GM12878 (cell line): ENCODE measurements at regions of chr14 and their contacts with region 1.

Region 1: DNA sequence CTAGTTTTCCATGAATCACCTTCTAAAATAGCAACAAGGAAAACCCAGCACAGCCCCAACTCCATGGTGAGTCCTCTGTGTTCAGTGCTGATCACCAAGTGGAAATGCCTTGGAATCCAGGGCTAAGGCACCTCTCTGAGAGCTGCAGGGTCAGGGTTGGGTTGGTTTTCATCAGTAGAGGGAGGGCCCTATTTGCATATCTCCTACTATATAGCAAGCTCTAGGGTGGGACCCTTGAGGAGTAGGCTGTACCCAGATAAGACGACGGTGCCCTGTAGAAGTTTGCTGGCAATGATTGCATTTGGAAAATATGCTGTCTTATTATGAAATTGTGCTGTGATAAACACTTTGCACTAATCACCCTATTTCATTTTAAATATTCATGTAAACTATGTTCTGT is 1011.8 kb downstream of the TMEM121 start:
- DNase-seq: no peak
- ATAC-seq: no peak
- H3K4me3 ChIP-seq: no peak overlapping the region
- H3K27ac ChIP-seq: no peak overlapping the region
- H3K4me1 ChIP-seq: peaks cover 7% of the 10 kb centered on the region; the same call in 1 of the 2 replicates
- H3K27me3 ChIP-seq: no peaks in the 10 kb centered on the region
- CTCF ChIP-seq: no peak
- EP300 ChIP-seq: no peak
- POLR2A ChIP-seq: no peak
- RAD21 ChIP-seq: no peak

Region 2: DNA sequence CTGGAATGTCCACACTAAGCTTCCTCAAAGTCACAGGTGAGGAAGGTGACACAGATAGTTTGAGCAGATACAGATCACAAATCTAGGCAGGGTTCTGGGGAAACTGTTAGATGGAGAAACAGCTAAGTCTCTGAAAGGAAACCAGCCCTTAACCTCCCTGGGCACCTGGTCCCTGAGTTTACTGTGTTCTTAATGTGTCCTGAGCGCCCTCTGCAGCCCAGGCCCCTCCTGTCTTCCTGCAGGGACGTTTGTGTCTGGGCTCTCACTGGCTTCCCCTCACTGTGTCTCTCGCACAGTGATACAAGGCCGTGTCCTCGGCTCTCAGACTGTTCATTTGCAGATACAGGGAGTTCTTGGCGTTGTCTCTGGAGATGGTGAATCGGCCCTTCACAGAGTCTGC is 327.5 kb before region 1 on chr14:
- CTCF ChIA-PET with region 1: no interaction called
- POLR2A ChIA-PET with region 1: no interaction called
- RAD21 ChIA-PET with region 1: no interaction called
- SMC1A ChIA-PET with region 1: no interaction called
- in situ Hi-C with region 1: no loop called
- intact Hi-C with region 1: no loop called
- DNase-seq: no peak
- ATAC-seq: no peak
- H3K4me3 ChIP-seq: no peak overlapping the region
- H3K27ac ChIP-seq: no peak overlapping the region
- H3K4me1 ChIP-seq: no peaks in the 10 kb centered on the region
- H3K27me3 ChIP-seq: no peaks in the 10 kb centered on the region; a peak in 1 of 4 replicates
- CTCF ChIP-seq: no peak; a peak in 1 of 6 replicates
- EP300 ChIP-seq: no peak
- POLR2A ChIP-seq: no peak
- RAD21 ChIP-seq: no peak

Region 3: GRCh38 chr14:106518054-106518943 is 19.9 kb before region 1 on chr14:
- CTCF ChIA-PET with region 1: interaction called, 132 read pairs
- POLR2A ChIA-PET with region 1: no interaction called
- RAD21 ChIA-PET with region 1: interaction called, 4 read pairs
- SMC1A ChIA-PET with region 1: interaction called, 3 read pairs
- in situ Hi-C with region 1: no loop called
- intact Hi-C with region 1: no loop called
- DNase-seq: no peak
- ATAC-seq: peak; percentile 84
- H3K4me3 ChIP-seq: no peak overlapping the region
- H3K27ac ChIP-seq: no peak overlapping the region
- H3K4me1 ChIP-seq: peaks cover 10% of the 10 kb centered on the region
- H3K27me3 ChIP-seq: no peaks in the 10 kb centered on the region; a peak in 1 of 4 replicates
- CTCF ChIP-seq: peak; percentile 63 to 76 (median 75)
- EP300 ChIP-seq: no peak
- POLR2A ChIP-seq: no peak
- RAD21 ChIP-seq: peak; percentile 78

Region 4: DNA sequence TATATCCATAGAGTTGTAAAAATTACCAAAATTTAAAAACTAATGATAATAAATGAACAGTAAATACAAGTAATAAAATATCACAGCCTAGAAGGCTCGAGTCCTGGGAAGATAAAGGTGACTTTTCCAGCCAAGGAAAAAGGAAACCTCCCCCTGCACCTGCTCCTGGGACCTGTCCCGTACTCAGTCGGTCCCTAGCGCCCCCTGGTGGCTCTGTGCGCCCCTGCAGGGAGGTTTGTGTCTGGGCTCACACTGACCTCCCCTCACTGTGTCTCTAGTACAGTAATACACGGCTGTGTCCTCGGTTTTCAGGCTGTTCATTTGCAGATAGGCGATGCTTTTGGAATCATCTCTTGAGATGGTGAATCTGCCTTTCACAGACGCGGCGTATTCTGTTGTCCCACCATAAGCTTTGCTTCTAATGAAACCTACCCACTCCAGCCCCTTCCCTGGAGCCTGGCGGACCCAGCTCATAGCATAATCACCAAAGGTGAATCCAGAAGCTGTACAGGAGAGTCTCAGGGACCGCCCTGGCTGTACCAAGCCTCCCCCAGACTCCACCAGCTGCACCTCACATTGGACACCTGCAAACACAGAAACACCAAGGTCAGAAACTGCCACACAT is 18.6 kb after region 1 on chr14:
- CTCF ChIA-PET with region 1: interaction called, 92 read pairs
- POLR2A ChIA-PET with region 1: no interaction called
- RAD21 ChIA-PET with region 1: interaction called, 29 read pairs
- SMC1A ChIA-PET with region 1: interaction called, 45 read pairs
- in situ Hi-C with region 1: no loop called
- intact Hi-C with region 1: loop called (anchors 1 kb)
- DNase-seq: no peak
- ATAC-seq: peak; percentile 89
- H3K4me3 ChIP-seq: no peak overlapping the region
- H3K27ac ChIP-seq: no peak overlapping the region
- H3K4me1 ChIP-seq: no peaks in the 10 kb centered on the region
- H3K27me3 ChIP-seq: no peaks in the 10 kb centered on the region
- CTCF ChIP-seq: peak; percentile 71 to 94 (median 93)
- EP300 ChIP-seq: no peak
- POLR2A ChIP-seq: no peak
- RAD21 ChIP-seq: peak; percentile 73

Region 5: DNA sequence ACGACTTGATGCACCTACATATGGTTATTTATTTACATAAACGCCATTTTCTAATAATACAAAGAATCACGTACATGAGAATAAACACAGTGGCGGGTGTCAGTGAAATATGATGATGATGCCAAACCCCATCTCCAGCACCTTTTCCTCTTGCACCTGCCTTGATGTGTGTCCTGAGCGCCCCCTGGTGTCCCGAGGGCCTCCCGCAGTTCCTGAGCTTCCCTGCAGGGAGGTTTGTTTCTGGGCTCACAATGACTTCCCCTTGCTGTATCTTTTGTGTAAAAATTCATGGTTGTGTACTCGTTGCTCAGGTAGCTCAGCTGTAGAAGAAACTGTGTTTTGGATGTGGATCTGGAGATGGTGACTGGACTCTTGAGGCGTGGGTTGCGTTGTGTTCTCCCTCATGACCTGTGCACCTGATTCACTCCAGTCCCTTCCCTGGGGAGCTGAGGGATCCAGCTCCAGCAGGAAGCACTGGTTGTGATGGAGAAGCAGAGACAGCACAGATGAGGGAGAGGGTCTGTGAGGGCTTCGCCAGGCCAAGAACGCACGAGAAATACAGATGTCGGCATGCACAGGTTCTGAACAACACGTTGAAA is 26.0 kb after region 1 on chr14:
- CTCF ChIA-PET with region 1: interaction called, 92 read pairs
- POLR2A ChIA-PET with region 1: no interaction called
- RAD21 ChIA-PET with region 1: interaction called, 29 read pairs
- SMC1A ChIA-PET with region 1: interaction called, 25 read pairs
- in situ Hi-C with region 1: no loop called
- intact Hi-C with region 1: loop called (anchors 1 kb)
- DNase-seq: no peak
- ATAC-seq: peak; percentile 96
- H3K4me3 ChIP-seq: no peak overlapping the region
- H3K27ac ChIP-seq: no peak overlapping the region
- H3K4me1 ChIP-seq: no peaks in the 10 kb centered on the region
- H3K27me3 ChIP-seq: peaks cover 0 to 2% of the 10 kb centered on the region in 2 experiments; a peak in 2 of 4 replicates
- CTCF ChIP-seq: peak; percentile 85 to 96 (median 96)
- EP300 ChIP-seq: no peak
- POLR2A ChIP-seq: no peak
- RAD21 ChIP-seq: peak; percentile 69

Region 6: DNA sequence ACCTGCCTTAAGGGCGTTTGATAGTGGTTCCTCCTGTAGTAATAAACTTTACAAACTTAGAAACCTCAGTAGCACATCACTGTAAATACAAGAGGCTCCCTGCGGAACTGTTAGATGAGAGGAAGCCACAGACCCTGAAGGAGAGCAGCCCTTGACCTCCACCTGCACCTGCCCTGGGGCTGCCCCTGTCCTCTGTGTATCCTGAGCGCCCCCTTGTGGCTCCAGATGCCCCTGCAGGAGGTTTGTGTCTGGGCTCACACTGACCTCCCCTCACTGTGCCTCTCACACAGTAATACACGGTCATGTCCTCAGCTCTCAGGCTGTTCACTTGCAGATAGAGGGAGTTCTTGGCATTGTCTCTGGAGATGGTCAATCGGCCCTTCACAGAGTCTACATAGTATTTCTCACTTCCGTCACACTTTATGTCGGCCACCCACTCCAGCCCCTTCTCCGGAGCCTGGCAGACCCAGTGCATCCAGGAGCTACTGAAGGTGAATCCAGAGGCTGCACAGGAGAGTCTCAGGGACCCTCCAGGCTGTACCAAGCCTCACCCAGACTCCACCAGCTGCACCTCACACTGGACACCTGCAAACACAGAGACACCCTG is 48.0 kb after region 1 on chr14:
- CTCF ChIA-PET with region 1: interaction called, 22 read pairs
- POLR2A ChIA-PET with region 1: no interaction called
- RAD21 ChIA-PET with region 1: no interaction called
- SMC1A ChIA-PET with region 1: interaction called, 4 read pairs
- in situ Hi-C with region 1: no loop called
- intact Hi-C with region 1: loop called (anchors 1 kb)
- DNase-seq: no peak
- ATAC-seq: peak; percentile 100
- H3K4me3 ChIP-seq: no peak overlapping the region
- H3K27ac ChIP-seq: no peak overlapping the region
- H3K4me1 ChIP-seq: peaks cover 6% of the 10 kb centered on the region
- H3K27me3 ChIP-seq: no peaks in the 10 kb centered on the region
- CTCF ChIP-seq: peak; percentile 72 to 94 (median 90)
- EP300 ChIP-seq: no peak
- POLR2A ChIP-seq: no peak
- RAD21 ChIP-seq: peak; percentile 63; the same call in 1 of the 2 replicates